Activated CD8-positive, alpha-beta T cell treated with anti-CD3 and anti-CD28 coated beads for 36 hours (primary cell): ENCODE measurements at regions of chr3 and their contacts with region 1.

Region 1: GRCh38 chr3:12175844-12176453 is 17.2 kb upstream of the TIMP4 start:
- DNase-seq: peak; percentile 68
- ATAC-seq: peak; percentile 68
- H3K4me3 Mint-ChIP-seq: no peak overlapping the region
- H3K27ac Mint-ChIP-seq: no peak overlapping the region
- H3K4me1 Mint-ChIP-seq: peaks cover 14% of the 10 kb centered on the region
- H3K27me3 Mint-ChIP-seq: peaks cover 1% of the 10 kb centered on the region
- CTCF ChIP-seq: peak; percentile 78

Region 2: DNA sequence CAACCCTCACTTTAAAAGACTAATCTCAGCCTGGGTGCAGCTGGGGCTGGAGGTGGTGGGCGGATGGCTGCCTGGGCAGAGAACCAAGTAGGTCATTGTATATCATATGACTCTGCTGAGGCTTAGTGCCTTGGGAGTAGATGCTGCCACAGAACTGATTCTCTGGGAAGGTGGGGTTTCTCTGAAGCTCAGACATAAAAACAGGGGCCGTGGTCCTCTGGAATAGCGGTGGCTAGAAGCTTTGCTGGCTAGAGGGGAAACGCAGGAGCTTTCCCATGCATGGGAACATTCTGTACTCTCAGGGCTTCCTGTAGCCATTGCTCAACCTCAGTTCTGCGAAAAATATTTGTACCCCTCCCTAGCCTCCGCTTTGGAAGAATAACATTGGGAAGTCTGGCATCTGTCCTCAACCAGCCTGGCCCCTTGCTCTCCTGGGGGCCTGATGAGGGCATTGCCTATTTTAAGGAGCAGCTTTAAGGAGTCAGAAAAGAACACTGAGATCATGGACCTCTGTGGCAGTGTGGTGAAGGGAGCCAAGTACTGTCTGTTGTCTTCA is 31.9 kb before region 1 on chr3:
- CTCF ChIA-PET with region 1: interaction called, 85 read pairs
- POLR2A ChIA-PET with region 1: no interaction called
- intact Hi-C with region 1: loop called (anchors 2 kb)
- DNase-seq: no peak
- ATAC-seq: no peak
- H3K4me3 Mint-ChIP-seq: no peak overlapping the region
- H3K27ac Mint-ChIP-seq: no peak overlapping the region
- H3K4me1 Mint-ChIP-seq: no peaks in the 10 kb centered on the region
- H3K27me3 Mint-ChIP-seq: peaks cover 7% of the 10 kb centered on the region
- CTCF ChIP-seq: no peak

Region 3: GRCh38 chr3:12149029-12149428 is 26.9 kb before region 1 on chr3:
- CTCF ChIA-PET with region 1: interaction called, 24 read pairs
- POLR2A ChIA-PET with region 1: no interaction called
- intact Hi-C with region 1: no loop called
- DNase-seq: no peak
- ATAC-seq: no peak
- H3K4me3 Mint-ChIP-seq: no peak overlapping the region
- H3K27ac Mint-ChIP-seq: no peak overlapping the region
- H3K4me1 Mint-ChIP-seq: no peaks in the 10 kb centered on the region
- H3K27me3 Mint-ChIP-seq: peaks cover 7% of the 10 kb centered on the region
- CTCF ChIP-seq: no peak

Region 4: DNA sequence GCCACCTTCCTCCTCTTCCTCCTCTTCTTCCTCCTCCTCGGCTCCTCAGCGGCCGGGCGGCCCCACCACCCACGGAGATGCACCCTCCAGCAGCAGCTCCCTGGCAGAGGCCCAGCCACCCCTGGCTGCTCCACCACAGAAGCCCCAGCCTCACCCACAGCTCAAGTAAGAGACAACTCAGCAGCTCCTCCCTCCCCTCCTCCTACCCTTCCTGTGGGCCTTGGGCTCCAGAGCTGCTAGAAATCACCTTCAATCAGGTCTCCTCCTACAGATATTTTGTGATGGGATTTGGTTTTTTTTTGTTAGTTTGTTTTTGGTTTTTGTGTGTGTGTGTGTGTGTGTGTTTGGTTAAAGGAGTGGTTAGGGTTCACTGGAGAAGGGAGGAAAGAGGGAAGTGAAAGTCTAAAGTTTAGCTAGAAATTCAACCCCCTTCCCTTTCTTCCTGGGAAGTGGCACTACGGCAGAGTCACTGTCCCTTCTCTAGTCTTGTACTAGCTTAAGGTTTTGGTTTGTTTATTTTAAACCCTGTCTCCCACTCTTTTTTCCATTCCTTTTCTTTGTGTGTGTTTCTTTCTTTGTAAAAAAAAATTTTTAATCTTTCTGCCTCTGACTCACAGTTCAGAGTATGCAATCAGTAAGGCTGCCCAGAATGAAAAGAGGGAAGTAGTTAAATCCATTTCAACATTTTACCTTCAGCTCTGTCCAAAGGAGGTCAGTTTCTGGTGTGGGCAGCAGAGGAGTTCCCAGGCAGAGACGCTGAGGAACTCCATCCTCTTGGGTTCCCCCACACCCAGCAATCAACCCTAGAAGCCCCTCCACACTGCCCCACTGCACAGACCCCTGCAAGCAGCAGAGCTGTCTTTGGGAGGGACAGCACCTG is 11.7 kb after region 1 on chr3:
- CTCF ChIA-PET with region 1: interaction called, 33 read pairs
- POLR2A ChIA-PET with region 1: interaction called, 3 read pairs
- intact Hi-C with region 1: no loop called
- DNase-seq: peak; percentile 94
- ATAC-seq: peak; percentile 95
- H3K4me3 Mint-ChIP-seq: peak overlapping the region; percentile 58
- H3K27ac Mint-ChIP-seq: peak overlapping the region; percentile 94
- H3K4me1 Mint-ChIP-seq: peaks cover 55% of the 10 kb centered on the region
- H3K27me3 Mint-ChIP-seq: no peaks in the 10 kb centered on the region
- CTCF ChIP-seq: no peak